ENCODE measurements at regions of chr3 and their contacts with region 1.

Region 1: DNA sequence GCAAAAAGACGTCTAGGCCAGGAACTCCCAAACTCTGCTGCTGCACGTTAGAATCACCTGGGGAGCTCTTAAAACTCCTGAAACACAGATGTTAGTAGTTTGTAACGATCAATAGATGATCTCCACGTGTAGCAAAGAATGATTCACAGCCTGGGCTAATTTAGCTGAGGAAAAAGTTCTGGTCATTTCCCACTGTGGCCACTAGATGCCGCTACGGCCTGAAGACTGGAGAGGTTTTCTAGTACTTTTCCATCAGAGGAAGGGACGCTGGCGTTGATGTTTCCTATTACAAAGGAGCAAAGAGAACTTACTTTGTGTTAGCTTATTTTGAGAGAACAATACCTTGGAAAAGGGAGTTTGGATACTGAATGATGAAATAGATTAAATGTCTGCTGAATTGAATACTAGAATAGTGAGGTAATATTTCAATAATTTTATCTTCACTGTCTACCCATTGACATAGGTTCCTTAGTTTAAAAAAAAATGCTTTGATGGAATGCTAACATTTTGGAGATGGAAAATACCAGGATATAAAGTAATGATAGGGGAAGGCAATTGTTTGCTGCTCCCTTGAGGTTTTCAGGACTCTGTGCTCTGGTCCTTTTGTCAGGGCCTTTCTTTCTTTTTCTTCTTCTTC is 159.1 kb downstream of the P3H2 start:
- DNase-seq: peak; percentile 60
- H3K4me3 ChIP-seq: no peak overlapping the region
- H3K27ac ChIP-seq: no peak overlapping the region
- H3K4me1 ChIP-seq: no peaks in the 10 kb centered on the region
- CTCF ChIP-seq: peak; percentile 94

Region 2: DNA sequence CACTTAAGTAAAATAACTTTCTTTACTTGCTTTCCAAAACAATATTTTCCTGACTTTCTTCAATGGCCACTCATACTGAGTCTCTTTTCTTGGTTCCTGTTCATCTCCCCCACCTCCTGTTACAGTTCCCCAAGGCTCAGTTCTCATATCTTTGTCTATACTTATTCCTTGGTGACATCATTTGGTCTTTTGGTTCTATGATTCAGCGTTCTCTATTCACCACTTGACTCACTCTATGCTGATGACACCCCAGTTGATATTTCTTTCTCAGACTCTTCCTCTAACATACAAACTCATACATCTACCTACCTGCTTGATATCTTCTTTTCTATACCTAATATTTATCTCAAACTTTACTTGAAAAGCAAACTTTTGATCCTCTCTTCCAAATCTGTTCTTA is 244.1 kb after region 1 on chr3:
- CTCF ChIA-PET with region 1: no interaction called
- POLR2A ChIA-PET with region 1: interaction called, 3 read pairs
- intact Hi-C with region 1: loop called (anchors 2 kb)
- DNase-seq: no peak
- H3K4me3 ChIP-seq: no peak overlapping the region
- H3K27ac ChIP-seq: no peak overlapping the region
- H3K4me1 ChIP-seq: no peaks in the 10 kb centered on the region
- CTCF ChIP-seq: no peak

Region 3: DNA sequence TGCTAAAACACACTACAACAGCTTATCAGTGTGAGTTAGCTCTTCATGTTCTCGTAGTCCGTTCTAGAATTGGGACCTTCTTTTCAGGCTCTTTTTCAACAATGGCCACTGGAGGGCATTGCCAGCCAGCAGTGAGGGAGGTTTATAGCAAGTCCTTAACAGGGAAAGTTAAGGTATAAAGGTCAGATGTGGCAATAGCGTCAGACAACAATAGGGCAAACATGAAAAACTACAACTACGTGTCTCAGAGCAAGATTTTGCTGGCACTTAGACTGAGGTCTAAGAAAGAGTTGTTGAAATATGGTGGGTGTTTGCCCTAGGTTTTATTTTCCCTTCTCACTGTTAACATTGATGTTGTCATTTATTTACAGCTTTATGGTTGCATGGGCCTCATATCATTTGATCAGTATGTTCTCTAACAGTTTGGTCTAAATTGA is 739.5 kb after region 1 on chr3:
- CTCF ChIA-PET with region 1: no interaction called
- POLR2A ChIA-PET with region 1: no interaction called
- intact Hi-C with region 1: loop called (anchors 5 kb)
- DNase-seq: peak; percentile 40
- H3K4me3 ChIP-seq: no peak overlapping the region
- H3K27ac ChIP-seq: no peak overlapping the region
- H3K4me1 ChIP-seq: no peaks in the 10 kb centered on the region
- CTCF ChIP-seq: peak; percentile 78

Measured in OCI-LY7 (cell line).